ENCODE measurements at regions of chr2 and their contacts with region 1.

Region 1: DNA sequence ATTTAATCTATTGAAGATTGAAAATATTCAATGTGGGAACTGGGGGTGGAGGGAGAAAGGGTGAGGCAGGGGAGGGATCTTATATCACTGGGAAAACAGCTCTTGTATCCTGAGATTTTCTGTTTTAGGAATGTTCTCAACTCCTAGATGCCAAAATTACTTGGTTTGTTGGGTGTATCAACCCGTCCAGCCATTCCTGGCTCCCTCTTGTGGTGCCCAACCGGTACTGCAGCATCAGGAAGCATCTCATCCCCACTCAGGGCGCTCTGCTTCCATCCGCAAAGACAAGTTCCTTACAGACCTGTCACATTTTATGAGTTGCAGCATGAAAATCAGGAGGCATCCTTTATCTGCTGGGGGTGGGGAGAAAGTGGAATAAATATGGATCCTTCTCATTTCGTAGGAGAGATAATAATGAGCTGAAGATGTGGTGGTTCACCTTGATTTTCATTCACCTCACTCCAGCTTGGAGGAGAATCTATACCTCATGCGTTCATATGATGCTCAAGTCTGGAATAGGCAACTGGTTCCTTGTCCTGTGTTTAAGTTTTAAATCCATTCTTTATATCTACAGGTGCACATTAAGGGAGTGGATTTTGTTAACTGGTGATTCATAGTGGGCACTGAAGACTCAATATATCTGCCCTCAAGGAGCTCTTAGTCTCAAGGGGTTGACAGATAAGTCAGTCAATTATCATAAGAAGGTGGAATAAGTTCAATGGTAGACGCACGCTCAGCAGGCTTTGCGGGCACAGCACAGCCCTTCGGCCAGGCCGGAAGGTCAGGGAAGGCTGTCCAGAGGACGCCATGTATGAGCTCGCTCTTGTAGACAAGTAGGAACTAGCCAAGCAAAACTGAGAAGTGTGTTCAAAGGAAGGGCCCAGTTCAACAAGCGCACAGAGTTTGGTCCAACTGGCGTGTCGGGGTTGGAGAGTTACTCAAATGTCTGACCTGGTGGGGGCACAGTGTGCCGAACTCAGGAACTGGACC is 127.3 kb downstream of the RNF144A start:
- DNase-seq: peak; percentile 71
- H3K4me3 Mint-ChIP-seq: no peak overlapping the region
- H3K27ac Mint-ChIP-seq: no peak overlapping the region
- H3K4me1 Mint-ChIP-seq: peaks cover 18% of the 10 kb centered on the region
- H3K27me3 Mint-ChIP-seq: no peaks in the 10 kb centered on the region

Region 2: DNA sequence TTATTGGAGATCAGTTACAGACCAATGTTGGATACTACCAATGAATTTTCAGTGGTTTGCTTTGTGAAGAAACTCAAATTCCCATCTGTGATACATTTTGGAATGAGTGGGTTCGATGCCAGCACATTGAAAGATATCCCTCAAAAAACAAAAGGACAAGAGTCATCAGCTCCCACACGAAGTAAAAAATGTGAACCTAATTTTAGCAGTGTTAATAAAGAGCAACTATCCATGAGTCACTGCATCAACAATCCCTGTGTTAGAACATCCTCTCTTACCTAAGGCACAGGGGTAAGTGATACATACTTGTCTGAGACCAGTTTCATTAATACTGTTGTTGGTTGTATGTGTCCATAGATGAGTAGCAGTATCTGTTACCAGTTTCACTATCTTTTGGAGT is 1904.2 kb before region 1 on chr2:
- CTCF ChIA-PET with region 1: no interaction called
- intact Hi-C with region 1: no loop called
- DNase-seq: no peak
- H3K4me3 Mint-ChIP-seq: no peak overlapping the region
- H3K27ac Mint-ChIP-seq: no peak overlapping the region
- H3K4me1 Mint-ChIP-seq: no peaks in the 10 kb centered on the region
- H3K27me3 Mint-ChIP-seq: no peaks in the 10 kb centered on the region

Region 3: GRCh38 chr2:6826081-6826913 is 218.3 kb before region 1 on chr2:
- CTCF ChIA-PET with region 1: interaction called, 13 read pairs
- intact Hi-C with region 1: loop called (anchors 1 kb)
- DNase-seq: peak; percentile 81
- H3K4me3 Mint-ChIP-seq: no peak overlapping the region
- H3K27ac Mint-ChIP-seq: no peak overlapping the region
- H3K4me1 Mint-ChIP-seq: peaks cover 2% of the 10 kb centered on the region
- H3K27me3 Mint-ChIP-seq: no peaks in the 10 kb centered on the region

Region 4: GRCh38 chr2:6896930-6897759 is 147.4 kb before region 1 on chr2:
- CTCF ChIA-PET with region 1: interaction called, 101 read pairs
- intact Hi-C with region 1: loop called (anchors 1 kb)
- DNase-seq: no peak
- H3K4me3 Mint-ChIP-seq: no peak overlapping the region
- H3K27ac Mint-ChIP-seq: peak overlapping the region; percentile 21
- H3K4me1 Mint-ChIP-seq: peaks cover 13% of the 10 kb centered on the region
- H3K27me3 Mint-ChIP-seq: no peaks in the 10 kb centered on the region

Region 5: DNA sequence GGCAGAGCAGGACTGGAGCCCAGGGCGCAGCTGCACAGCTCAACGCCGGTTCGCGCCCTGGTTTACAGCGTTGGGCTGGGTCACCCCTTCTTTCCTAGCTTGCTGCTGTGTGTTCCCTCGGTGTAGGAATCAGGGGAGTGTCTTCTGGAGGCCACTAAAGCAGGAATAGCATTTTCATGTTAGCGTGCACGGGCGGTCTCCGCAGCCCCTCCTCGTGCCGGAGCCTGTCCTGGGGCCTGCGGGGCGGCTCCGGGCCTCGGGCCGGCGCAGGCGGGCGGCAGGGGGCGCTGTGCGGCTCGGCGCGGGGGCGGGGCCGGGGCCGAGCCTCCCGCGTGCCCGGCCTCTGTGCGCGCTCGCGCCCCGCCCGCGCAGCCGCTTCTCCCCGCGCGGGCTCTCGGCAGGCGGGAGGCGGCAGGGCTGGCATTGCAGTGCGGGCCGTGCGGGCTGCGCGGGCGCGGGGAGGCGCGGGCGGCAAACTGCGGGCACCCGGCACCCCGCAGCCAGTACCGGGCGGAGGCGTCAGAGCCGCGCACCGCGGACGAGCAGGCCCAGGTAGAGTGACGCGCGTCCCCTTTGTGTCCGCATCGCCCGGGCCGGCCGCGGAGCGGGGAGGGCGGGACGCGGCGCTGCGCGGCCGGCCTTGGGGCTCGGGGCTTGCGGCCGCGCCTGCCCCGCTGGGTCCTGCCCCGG is 127.3 kb before region 1 on chr2 and contains the start of gene RNF144A:
- CTCF ChIA-PET with region 1: interaction called, 10 read pairs
- intact Hi-C with region 1: loop called (anchors 2 kb)
- DNase-seq: peak; percentile 67
- H3K4me3 Mint-ChIP-seq: peak within 1 kb of the TSS; percentile 76
- H3K27ac Mint-ChIP-seq: peak within 1 kb of the TSS; percentile 85
- H3K4me1 Mint-ChIP-seq: peaks cover 75% of the 10 kb centered on the region
- H3K27me3 Mint-ChIP-seq: no peaks in the 10 kb centered on the region
- total RNA-seq, gene RNF144A: 49.0 to 50.6 TPM

Region 6: GRCh38 chr2:7023542-7023941 is 21.0 kb before region 1 on chr2:
- CTCF ChIA-PET with region 1: interaction called, 32 read pairs
- intact Hi-C with region 1: no loop called
- DNase-seq: no peak
- H3K4me3 Mint-ChIP-seq: no peak overlapping the region
- H3K27ac Mint-ChIP-seq: no peak overlapping the region
- H3K4me1 Mint-ChIP-seq: no peaks in the 10 kb centered on the region
- H3K27me3 Mint-ChIP-seq: no peaks in the 10 kb centered on the region

Region 7: DNA sequence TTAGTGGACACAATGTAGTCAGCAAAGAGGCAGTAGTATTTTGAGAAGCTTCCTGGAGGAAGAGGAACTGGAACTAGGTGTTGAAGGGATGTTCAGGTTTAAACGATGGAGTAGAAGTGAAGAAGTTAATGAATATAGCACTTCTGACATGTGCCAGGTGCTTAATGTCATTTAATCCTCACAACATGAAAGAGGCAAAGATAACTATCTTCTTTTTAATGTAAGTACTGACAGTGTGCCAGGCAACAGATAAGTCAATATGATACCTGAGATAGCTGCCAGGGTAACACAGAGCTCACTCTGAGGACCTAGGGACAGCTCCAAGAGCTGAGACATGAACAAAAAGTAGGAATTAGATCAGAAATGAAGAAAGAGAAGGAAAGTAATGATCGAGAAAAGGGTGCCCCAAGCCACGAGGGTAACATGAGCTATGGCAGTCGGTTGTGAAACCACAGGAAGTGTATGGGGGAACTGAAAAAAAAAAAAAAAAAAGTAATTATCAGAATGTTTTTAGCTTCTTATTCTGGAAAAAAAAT is 13.4 kb after region 1 on chr2:
- CTCF ChIA-PET with region 1: interaction called, 23 read pairs
- intact Hi-C with region 1: no loop called
- DNase-seq: peak; percentile 35
- H3K4me3 Mint-ChIP-seq: peak overlapping the region; percentile 2
- H3K27ac Mint-ChIP-seq: peak overlapping the region; percentile 19
- H3K4me1 Mint-ChIP-seq: peaks cover 17% of the 10 kb centered on the region
- H3K27me3 Mint-ChIP-seq: no peaks in the 10 kb centered on the region